Gastrocnemius medialis (tissue), 4 donors: ENCODE measurements at regions of chr4 and their contacts with region 1.

Region 1: GRCh38 chr4:169010125-169011023 is at the start of gene CBR4:
- DNase-seq: peak; percentile 97
- ATAC-seq: peak; percentile 94 to 98
- H3K4me3 ChIP-seq: peak within 1 kb of the TSS; percentile 79 to 89 (median 86)
- H3K27ac ChIP-seq: peak within 1 kb of the TSS; percentile 94 to 98 (median 97)
- H3K4me1 ChIP-seq: peaks cover 28 to 32% of the 10 kb centered on the region in 2 donors
- H3K27me3 ChIP-seq: no peaks in the 10 kb centered on the region
- CTCF ChIP-seq: peak in 4 of 5 experiments; percentile 24 to 48 (median 30)
- POLR2A ChIP-seq: peak; percentile 86 to 93
- total RNA-seq, gene CBR4: 11.5 to 21.0 (median 17.5) TPM

Region 2: DNA sequence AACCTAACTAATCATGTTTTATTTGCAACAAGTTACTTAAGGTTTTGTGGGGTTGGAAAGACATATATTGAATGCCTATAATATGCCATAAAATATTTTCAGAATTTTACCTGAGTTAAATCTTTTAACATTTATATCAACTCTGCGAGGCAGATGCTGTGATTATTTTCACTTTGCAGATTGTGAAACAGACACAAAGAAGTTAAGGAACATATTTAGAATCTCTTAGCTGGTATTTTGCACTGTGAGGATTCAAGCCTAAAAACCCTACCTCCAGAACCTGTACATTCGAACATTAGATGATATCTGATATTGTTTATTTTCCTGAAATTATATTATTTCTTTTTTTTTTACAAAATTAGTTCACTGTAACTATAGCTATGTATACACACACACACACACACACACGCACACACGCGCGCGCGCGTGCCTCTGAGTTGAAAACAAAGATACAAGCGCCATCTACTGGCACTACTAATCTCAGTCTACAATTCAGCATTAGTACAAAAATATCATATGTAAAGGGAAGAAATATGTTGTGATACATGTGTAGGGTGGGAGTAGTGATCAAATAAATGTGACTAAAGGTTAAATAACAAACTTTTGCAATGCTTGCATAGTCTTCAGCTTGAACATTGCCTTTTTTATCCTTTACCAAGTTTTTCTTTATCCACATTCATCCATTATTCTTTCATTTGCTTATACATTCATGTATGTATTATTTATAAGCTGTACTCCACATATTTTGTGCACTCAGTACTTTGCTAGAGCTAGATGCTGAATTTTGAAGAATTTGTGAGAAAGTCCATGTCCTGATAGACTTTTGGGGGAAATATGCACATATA is 856.6 kb before region 1 on chr4:
- in situ Hi-C with region 1: no loop called
- intact Hi-C with region 1: no loop called
- DNase-seq: peak; percentile 42 to 70
- ATAC-seq: peak; percentile 47 to 51
- H3K4me3 ChIP-seq: peak overlapping the region; percentile 16 to 43 (median 19)
- H3K27ac ChIP-seq: no peak overlapping the region
- H3K4me1 ChIP-seq: no peaks in the 10 kb centered on the region
- H3K27me3 ChIP-seq: no peaks in the 10 kb centered on the region
- CTCF ChIP-seq: peak; percentile 39 to 69 (median 50)
- POLR2A ChIP-seq: no peak

Region 3: GRCh38 chr4:168710353-168710946 is 299.9 kb before region 1 on chr4:
- in situ Hi-C with region 1: loop called in 1 of 4 experiments (anchors 25 kb)
- intact Hi-C with region 1: loop called (anchors 10 kb)
- DNase-seq: peak; percentile 17 to 43
- ATAC-seq: peak; percentile 66 to 74
- H3K4me3 ChIP-seq: no peak overlapping the region
- H3K27ac ChIP-seq: peak overlapping the region; percentile 29 to 72 (median 58)
- H3K4me1 ChIP-seq: peaks cover 24 to 26% of the 10 kb centered on the region in 2 donors
- H3K27me3 ChIP-seq: no peaks in the 10 kb centered on the region
- CTCF ChIP-seq: peak; percentile 48 to 75 (median 66)
- POLR2A ChIP-seq: no peak

Region 4: GRCh38 chr4:169270810-169271691 is 260.7 kb after region 1 on chr4 and contains the start of gene SH3RF1:
- in situ Hi-C with region 1: loop called in 2 of 4 experiments (anchors 10 to 25 kb)
- intact Hi-C with region 1: loop called (anchors 2 kb)
- DNase-seq: peak; percentile 81 to 83
- ATAC-seq: peak; percentile 85 to 88
- H3K4me3 ChIP-seq: peak within 1 kb of the TSS; percentile 73 to 95 (median 92)
- H3K27ac ChIP-seq: peak within 1 kb of the TSS; percentile 87 to 95 (median 94)
- H3K4me1 ChIP-seq: peaks cover 22 to 24% of the 10 kb centered on the region in 2 donors
- H3K27me3 ChIP-seq: no peaks in the 10 kb centered on the region
- CTCF ChIP-seq: peak in 3 of 5 experiments; percentile 35 to 52 (median 44)
- POLR2A ChIP-seq: peak; percentile 89 to 95
- total RNA-seq, gene SH3RF1: 12.6 to 27.0 (median 13.4) TPM

Region 5: GRCh38 chr4:169485791-169486742 is 475.7 kb after region 1 on chr4:
- in situ Hi-C with region 1: loop called (anchors 10 to 25 kb)
- intact Hi-C with region 1: loop called (anchors 5 kb)
- DNase-seq: no peak
- ATAC-seq: peak; percentile 54 to 55
- H3K4me3 ChIP-seq: no peak overlapping the region
- H3K27ac ChIP-seq: no peak overlapping the region
- H3K4me1 ChIP-seq: no peaks in the 10 kb centered on the region
- H3K27me3 ChIP-seq: no peaks in the 10 kb centered on the region
- CTCF ChIP-seq: peak in 4 of 5 experiments; percentile 20 to 42 (median 26)
- POLR2A ChIP-seq: no peak